CD4-positive, alpha-beta T cell (primary cell): ENCODE measurements at regions of chr7 and their contacts with region 1.

Region 1: DNA sequence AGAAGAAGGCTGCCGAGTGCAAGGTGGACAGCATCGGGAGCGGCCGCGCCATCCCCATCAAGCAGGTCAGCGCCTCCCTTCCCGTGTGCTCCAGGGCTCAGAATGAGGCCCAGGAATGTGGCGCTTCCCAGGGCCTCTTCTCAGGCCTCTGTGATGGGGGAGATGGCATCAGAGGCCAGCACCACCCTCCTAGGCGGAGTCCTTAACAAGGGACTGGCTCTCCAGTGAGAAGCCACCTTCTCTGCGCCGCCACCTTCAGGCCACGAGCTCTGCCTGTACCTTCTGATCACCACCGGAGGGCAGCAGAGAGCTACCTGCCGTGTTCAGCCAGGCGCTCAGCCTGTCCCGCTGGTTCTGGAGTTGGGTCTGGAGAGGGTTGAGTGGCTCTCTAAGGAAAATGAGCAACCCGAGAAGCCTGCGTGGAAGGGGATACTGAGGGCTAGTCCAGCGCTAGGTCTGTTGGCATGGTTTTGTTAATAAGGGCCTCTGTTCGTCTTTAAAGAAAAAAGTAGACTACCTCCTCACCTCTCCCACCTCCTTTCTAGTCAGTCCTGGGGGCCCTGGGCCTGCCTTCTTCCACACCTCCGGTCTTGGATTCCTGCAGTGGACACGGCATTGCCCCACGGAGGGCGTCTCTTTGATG is 37.7 kb downstream of the AGAP3 start:
- DNase-seq: peak; percentile 74 to 91 (median 80)
- ATAC-seq: peak; percentile 99
- H3K4me3 ChIP-seq: no peak overlapping the region
- H3K4me3 Mint-ChIP-seq: peak overlapping the region; percentile 6
- H3K27ac ChIP-seq: no peak overlapping the region
- H3K27ac Mint-ChIP-seq: no peak overlapping the region
- H3K4me1 ChIP-seq: peaks cover 9% of the 10 kb centered on the region
- H3K4me1 Mint-ChIP-seq: peaks cover 6% of the 10 kb centered on the region
- H3K27me3 ChIP-seq: no peaks in the 10 kb centered on the region
- H3K27me3 Mint-ChIP-seq: no peaks in the 10 kb centered on the region
- CTCF ChIP-seq: peak; percentile 94

Region 2: DNA sequence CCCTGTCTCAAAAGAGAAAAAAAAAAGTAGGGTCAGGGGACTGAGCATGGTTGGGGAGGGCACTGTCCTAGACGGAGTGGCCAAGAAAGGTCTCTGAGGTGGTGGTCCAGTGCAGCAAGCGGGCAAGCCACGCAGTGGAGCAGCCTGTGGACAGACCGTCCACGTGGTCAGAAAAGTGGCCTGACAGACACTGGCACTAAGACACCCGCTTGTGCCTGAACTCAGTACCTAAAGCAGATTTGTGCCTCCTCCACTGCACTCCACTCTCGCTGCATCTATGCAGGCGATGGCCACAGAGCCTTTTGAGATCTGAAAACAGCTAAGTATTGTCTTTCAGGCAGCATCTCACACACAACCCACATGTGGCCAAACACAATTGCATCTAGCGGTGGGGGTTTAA is 54.3 kb after region 1 on chr7:
- CTCF ChIA-PET with region 1: no interaction called
- POLR2A ChIA-PET with region 1: no interaction called
- intact Hi-C with region 1: no loop called
- DNase-seq: peak in 1 of 14 experiments; percentile 17
- ATAC-seq: no peak
- H3K4me3 ChIP-seq: no peak overlapping the region
- H3K4me3 Mint-ChIP-seq: no peak overlapping the region
- H3K27ac ChIP-seq: no peak overlapping the region
- H3K27ac Mint-ChIP-seq: no peak overlapping the region
- H3K4me1 ChIP-seq: peaks cover 6% of the 10 kb centered on the region
- H3K4me1 Mint-ChIP-seq: no peaks in the 10 kb centered on the region
- H3K27me3 ChIP-seq: peaks cover 0 to 5% of the 10 kb centered on the region in 2 experiments
- H3K27me3 Mint-ChIP-seq: peaks cover 26% of the 10 kb centered on the region
- CTCF ChIP-seq: no peak

Region 3: GRCh38 chr7:151304856-151305255 is 180.9 kb after region 1 on chr7:
- CTCF ChIA-PET with region 1: no interaction called
- POLR2A ChIA-PET with region 1: no interaction called
- intact Hi-C with region 1: loop called (anchors 1 kb)
- DNase-seq: peak in 1 of 14 experiments; percentile 6
- ATAC-seq: no peak
- H3K4me3 ChIP-seq: no peak overlapping the region
- H3K4me3 Mint-ChIP-seq: peak overlapping the region; percentile 30
- H3K27ac ChIP-seq: no peak overlapping the region
- H3K27ac Mint-ChIP-seq: no peak overlapping the region
- H3K4me1 ChIP-seq: peaks cover 11% of the 10 kb centered on the region
- H3K4me1 Mint-ChIP-seq: peaks cover 8% of the 10 kb centered on the region
- H3K27me3 ChIP-seq: peaks cover 26 to 37% of the 10 kb centered on the region in 2 experiments
- H3K27me3 Mint-ChIP-seq: peaks cover 43% of the 10 kb centered on the region
- CTCF ChIP-seq: no peak